ENCODE measurements at regions of chr1 and their contacts with region 1.

Region 1: GRCh38 chr1:25695090-25695770 is 78.6 kb downstream of the MAN1C1 start:
- DNase-seq: peak; percentile 60 to 85
- H3K4me3 ChIP-seq: no peak overlapping the region
- H3K27ac ChIP-seq: peak overlapping the region; percentile 64
- H3K4me1 ChIP-seq: peaks cover 19% of the 10 kb centered on the region
- H3K27me3 ChIP-seq: no peaks in the 10 kb centered on the region
- CTCF ChIP-seq: no peak; the same call in 1 of the 2 replicates

Region 2: GRCh38 chr1:25616095-25616986 is 78.9 kb before region 1 on chr1 and contains the start of gene MAN1C1:
- CTCF ChIA-PET with region 1: interaction called, 5 read pairs
- POLR2A ChIA-PET with region 1: no interaction called
- intact Hi-C with region 1: loop called (anchors 10 kb)
- DNase-seq: peak; percentile 66 to 88
- H3K4me3 ChIP-seq: peak within 1 kb of the TSS; percentile 60
- H3K27ac ChIP-seq: no peak within 1 kb of the TSS
- H3K4me1 ChIP-seq: peaks cover 11% of the 10 kb centered on the region; the same call in 1 of the 2 replicates
- H3K27me3 ChIP-seq: no peaks in the 10 kb centered on the region; the same call in 1 of the 2 replicates
- CTCF ChIP-seq: peak; percentile 37; the same call in 1 of the 2 replicates
- total RNA-seq, gene MAN1C1: 0.41 and 0.48 TPM in 2 replicates

Region 3: DNA sequence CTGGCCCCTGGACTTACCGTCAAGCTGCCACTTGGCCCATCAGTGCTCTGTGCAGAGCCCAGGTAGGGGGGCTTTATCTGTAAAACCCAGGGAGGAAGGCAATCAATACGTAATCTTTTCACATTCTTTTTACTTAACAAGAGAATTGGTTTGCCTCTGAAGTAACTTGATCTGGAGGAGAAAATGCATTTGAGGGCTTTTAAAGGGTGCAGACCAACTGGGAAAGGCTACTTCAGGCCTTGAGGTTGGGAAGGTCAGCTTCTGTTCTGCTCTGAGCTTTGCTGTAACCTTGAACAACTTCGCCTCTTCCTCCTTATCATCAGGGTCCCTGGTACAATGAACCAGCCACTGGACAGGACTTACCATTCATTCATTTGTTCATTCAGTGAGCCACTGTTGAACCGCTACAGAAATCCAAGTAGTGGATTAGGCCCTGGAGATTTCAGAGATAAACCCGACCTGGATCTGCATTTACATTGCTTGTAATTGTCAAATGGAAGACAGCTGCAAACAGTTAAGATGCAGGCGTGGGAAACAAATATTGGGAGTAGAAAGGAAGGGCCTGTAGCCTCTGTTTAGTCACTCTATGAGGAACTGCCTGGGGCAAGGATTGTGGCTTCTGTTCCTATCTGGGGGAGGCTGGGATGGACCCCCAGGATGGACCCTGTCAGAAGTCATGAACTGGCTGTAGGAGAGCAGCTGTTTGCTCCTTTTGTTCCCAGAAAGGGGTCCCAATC is 12.2 kb after region 1 on chr1:
- CTCF ChIA-PET with region 1: interaction called, 3 read pairs
- POLR2A ChIA-PET with region 1: no interaction called
- intact Hi-C with region 1: loop called (anchors 1 kb)
- DNase-seq: peak; percentile 27 to 80
- H3K4me3 ChIP-seq: peak overlapping the region; percentile 29; the same call in 1 of the 2 replicates
- H3K27ac ChIP-seq: peak overlapping the region; percentile 88
- H3K4me1 ChIP-seq: peaks cover 32% of the 10 kb centered on the region
- H3K27me3 ChIP-seq: no peaks in the 10 kb centered on the region
- CTCF ChIP-seq: no peak

Region 4: DNA sequence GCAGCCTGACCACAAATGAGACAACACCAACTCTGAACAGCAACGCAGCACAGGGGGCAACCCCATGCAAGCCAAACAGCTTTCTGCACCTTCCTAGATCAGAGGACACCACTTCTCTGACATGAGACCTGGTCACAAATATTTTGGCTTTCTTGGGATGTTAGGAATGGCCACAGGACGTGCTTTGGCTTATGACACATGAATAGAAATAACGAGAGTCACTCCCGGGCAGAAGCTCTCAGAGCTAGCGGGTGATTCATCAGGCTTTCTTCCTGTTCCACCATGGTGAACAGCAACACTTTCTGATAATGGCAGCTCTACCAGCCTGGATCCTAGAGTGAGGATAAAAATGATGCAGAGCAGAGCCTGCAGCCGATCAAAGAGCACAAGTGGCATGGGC is 263.2 kb after region 1 on chr1:
- CTCF ChIA-PET with region 1: no interaction called
- POLR2A ChIA-PET with region 1: no interaction called
- intact Hi-C with region 1: no loop called
- DNase-seq: no peak
- H3K4me3 ChIP-seq: no peak overlapping the region
- H3K27ac ChIP-seq: no peak overlapping the region
- H3K4me1 ChIP-seq: no peaks in the 10 kb centered on the region
- H3K27me3 ChIP-seq: no peaks in the 10 kb centered on the region
- CTCF ChIP-seq: no peak